CD8-positive, alpha-beta T cell (primary cell): ENCODE measurements at regions of chr1 and their contacts with region 1.

Region 1: GRCh38 chr1:101496109-101496508 is 259.3 kb downstream of the S1PR1 start:
- DNase-seq: no peak
- ATAC-seq: no peak
- H3K4me3 ChIP-seq: no peak overlapping the region
- H3K4me3 Mint-ChIP-seq: no peak overlapping the region
- H3K27ac ChIP-seq: no peak overlapping the region
- H3K27ac Mint-ChIP-seq: no peak overlapping the region
- H3K4me1 ChIP-seq: no peaks in the 10 kb centered on the region
- H3K4me1 Mint-ChIP-seq: no peaks in the 10 kb centered on the region
- H3K27me3 ChIP-seq: no peaks in the 10 kb centered on the region
- H3K27me3 Mint-ChIP-seq: peaks cover 6% of the 10 kb centered on the region
- CTCF ChIP-seq: no peak

Region 2: DNA sequence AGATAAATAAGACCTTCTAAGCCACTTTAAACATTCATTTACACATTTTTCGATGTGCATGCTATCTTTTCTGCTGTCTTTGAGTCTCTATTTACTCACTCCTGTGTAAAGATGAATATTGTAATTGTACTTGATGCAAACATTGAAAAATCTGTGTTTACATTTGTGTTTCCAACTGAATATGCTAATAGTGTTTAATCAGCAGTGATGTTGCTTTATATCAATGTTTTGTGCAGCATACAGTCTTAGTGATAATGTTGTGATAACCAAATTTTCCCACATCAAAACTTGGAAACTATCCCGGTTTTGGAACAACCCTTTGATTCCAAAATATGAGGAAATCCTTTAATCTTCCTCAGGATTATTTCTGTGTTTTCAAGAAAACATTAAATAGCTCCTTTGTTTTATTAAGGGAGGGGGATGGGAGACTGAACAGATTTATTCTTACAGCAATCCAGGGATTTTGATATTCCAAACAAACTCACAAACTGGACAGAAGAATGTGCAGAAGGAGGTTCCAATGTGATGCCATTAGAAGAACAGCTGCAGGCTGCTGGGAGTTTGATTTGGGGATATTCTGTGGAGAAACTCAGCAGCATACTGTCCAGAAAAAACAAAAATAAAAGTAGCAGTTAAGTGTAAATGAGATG is 11.3 kb before region 1 on chr1:
- CTCF ChIA-PET with region 1: no interaction called
- POLR2A ChIA-PET with region 1: no interaction called
- intact Hi-C with region 1: no loop called
- DNase-seq: no peak
- ATAC-seq: no peak
- H3K4me3 ChIP-seq: no peak overlapping the region
- H3K4me3 Mint-ChIP-seq: no peak overlapping the region
- H3K27ac ChIP-seq: no peak overlapping the region
- H3K27ac Mint-ChIP-seq: no peak overlapping the region
- H3K4me1 ChIP-seq: no peaks in the 10 kb centered on the region
- H3K4me1 Mint-ChIP-seq: no peaks in the 10 kb centered on the region
- H3K27me3 ChIP-seq: no peaks in the 10 kb centered on the region
- H3K27me3 Mint-ChIP-seq: peaks cover 4% of the 10 kb centered on the region
- CTCF ChIP-seq: no peak

Region 3: GRCh38 chr1:101506541-101507164 is 10.5 kb after region 1 on chr1:
- CTCF ChIA-PET with region 1: interaction called, 12 read pairs
- POLR2A ChIA-PET with region 1: interaction called, 3 read pairs
- intact Hi-C with region 1: no loop called
- DNase-seq: peak in 7 of 9 experiments; percentile 5 to 65 (median 35)
- ATAC-seq: peak; percentile 54
- H3K4me3 ChIP-seq: no peak overlapping the region
- H3K4me3 Mint-ChIP-seq: no peak overlapping the region
- H3K27ac ChIP-seq: no peak overlapping the region
- H3K27ac Mint-ChIP-seq: no peak overlapping the region
- H3K4me1 ChIP-seq: no peaks in the 10 kb centered on the region
- H3K4me1 Mint-ChIP-seq: no peaks in the 10 kb centered on the region
- H3K27me3 ChIP-seq: no peaks in the 10 kb centered on the region
- H3K27me3 Mint-ChIP-seq: no peaks in the 10 kb centered on the region
- CTCF ChIP-seq: peak; percentile 90